ENCODE measurements at regions of chr1 and their contacts with region 1.

Region 1: GRCh38 chr1:27349784-27350662 is 8.2 kb downstream of the SYTL1 start:
- DNase-seq: no peak
- H3K4me3 ChIP-seq: no peak overlapping the region
- H3K27ac ChIP-seq: no peak overlapping the region
- H3K4me1 ChIP-seq: peaks cover 21% of the 10 kb centered on the region
- H3K27me3 ChIP-seq: no peaks in the 10 kb centered on the region
- CTCF ChIP-seq: no peak

Region 2: DNA sequence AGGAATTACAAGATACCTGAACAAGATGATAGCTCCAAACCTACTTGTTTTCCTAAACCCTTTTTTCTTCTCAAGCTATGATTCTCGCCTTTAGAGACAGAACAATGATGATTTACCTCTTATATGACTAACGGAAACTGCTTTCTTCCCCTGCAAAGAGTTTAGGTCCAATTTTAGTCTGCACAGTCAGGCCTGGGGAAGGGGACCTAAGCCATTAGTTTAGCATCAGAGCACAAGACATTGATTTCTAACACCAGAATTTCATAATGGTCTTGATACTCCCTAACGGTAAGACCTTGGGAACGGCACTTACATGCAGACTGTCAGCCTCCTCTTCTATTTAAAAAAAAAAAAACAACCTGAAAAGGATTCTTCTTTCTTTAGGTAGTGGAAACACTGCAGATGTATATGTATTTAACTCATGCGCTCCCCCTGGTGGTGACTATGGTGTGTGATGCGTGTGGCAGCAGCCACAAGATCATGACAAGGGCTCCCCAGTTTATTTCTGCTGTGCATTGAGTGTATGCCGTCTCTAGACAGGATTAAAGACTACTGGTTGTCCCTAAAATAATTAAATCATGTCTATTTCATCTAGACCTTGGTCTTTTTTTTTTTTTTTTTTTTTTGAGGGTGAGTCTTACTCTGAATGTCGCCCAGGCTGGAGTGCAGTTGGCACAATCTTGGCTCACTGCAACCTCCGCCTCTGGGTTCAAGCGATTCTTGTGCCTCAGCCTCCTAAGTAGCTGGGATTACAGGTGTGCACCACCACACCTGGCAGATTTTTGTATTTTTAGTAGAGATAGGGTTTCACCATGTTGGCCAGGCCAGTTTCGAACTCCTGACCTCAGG is 65.4 kb before region 1 on chr1:
- CTCF ChIA-PET with region 1: no interaction called
- dilution Hi-C with region 1: no loop called
- in situ Hi-C with region 1: no loop called
- intact Hi-C with region 1: no loop called
- DNase-seq: peak; percentile 55
- H3K4me3 ChIP-seq: no peak overlapping the region
- H3K27ac ChIP-seq: no peak overlapping the region
- H3K4me1 ChIP-seq: no peaks in the 10 kb centered on the region
- H3K27me3 ChIP-seq: no peaks in the 10 kb centered on the region
- CTCF ChIP-seq: peak; percentile 74 to 92

Region 3: DNA sequence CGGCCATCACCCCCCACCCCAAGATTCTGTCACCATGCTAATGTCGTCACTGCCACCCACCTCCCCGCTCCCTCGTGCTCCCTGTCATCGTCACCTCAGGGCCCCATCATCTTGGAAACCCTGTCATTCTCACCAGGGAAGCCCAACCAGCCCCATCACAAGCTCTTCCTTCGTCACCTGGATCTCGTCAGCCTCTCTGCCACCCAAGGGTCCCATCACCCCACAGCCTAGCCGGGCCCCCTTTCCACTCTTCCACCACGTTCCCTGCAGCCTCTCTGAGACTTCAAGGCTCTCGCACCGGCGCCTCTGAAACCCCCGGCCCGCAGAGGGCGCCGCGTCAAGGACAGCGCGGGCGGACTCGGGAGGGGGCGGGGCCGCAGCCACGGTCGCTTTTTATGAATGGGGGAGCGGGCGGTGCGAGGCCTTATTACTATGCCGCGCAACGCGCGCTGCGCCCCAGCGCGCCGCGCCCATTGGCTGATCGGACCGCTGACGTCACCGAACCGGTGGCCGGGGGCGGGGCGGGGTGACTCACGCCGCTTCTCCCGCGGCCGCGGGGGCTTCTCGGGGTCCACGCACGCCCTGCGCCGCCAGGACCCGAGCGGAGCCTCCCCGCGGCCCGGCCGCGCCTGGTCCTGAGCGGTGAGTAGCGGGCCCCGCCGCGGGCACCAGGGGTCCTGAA is 42.2 kb after region 1 on chr1 and contains the start of gene GPR3:
- CTCF ChIA-PET with region 1: no interaction called
- dilution Hi-C with region 1: no loop called
- in situ Hi-C with region 1: no loop called
- intact Hi-C with region 1: no loop called
- DNase-seq: peak; percentile 84
- H3K4me3 ChIP-seq: peak within 1 kb of the TSS; percentile 54 to 73 (median 64)
- H3K27ac ChIP-seq: peak within 1 kb of the TSS; percentile 86
- H3K4me1 ChIP-seq: peaks cover 26% of the 10 kb centered on the region
- H3K27me3 ChIP-seq: no peaks in the 10 kb centered on the region
- CTCF ChIP-seq: peak in 1 of 2 donors; percentile 54
- total RNA-seq, gene GPR3: 0.50 to 2.3 TPM

Region 4: GRCh38 chr1:27489910-27490741 is 140.1 kb after region 1 on chr1 and contains the start of gene WASF2:
- CTCF ChIA-PET with region 1: no interaction called
- dilution Hi-C with region 1: no loop called
- in situ Hi-C with region 1: no loop called
- intact Hi-C with region 1: no loop called
- DNase-seq: peak; percentile 95
- H3K4me3 ChIP-seq: peak within 1 kb of the TSS; percentile 63 to 94 (median 94)
- H3K27ac ChIP-seq: peak within 1 kb of the TSS; percentile 97
- H3K4me1 ChIP-seq: peaks cover 18% of the 10 kb centered on the region
- H3K27me3 ChIP-seq: no peaks in the 10 kb centered on the region
- CTCF ChIP-seq: no peak
- total RNA-seq, gene WASF2: 32.2 to 138 TPM

Region 5: GRCh38 chr1:27525296-27526272 is 175.6 kb after region 1 on chr1:
- CTCF ChIA-PET with region 1: no interaction called
- dilution Hi-C with region 1: no loop called
- in situ Hi-C with region 1: no loop called
- intact Hi-C with region 1: no loop called
- DNase-seq: peak; percentile 69
- H3K4me3 ChIP-seq: no peak overlapping the region
- H3K27ac ChIP-seq: peak overlapping the region; percentile 81
- H3K4me1 ChIP-seq: peaks cover 88% of the 10 kb centered on the region
- H3K27me3 ChIP-seq: no peaks in the 10 kb centered on the region
- CTCF ChIP-seq: no peak

Region 6: DNA sequence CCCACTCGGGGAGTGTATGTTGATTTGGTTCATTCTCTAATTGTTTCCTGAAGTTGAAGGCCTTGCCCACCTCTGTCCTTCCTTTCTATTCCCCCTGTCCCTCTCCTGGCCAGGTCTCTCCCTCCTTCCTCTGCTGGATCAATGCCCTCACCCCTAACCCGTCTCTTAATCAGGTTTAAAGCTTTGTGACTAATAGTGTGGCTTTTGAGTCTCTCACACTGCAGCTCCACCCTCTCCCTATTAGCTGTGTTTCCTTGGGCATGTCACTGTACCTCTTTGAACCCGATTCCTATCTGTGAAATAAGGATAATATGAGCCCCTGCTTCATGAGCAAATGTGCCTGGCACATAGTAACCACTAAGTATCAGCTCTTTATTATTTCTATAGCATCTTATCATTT is 233.5 kb after region 1 on chr1:
- CTCF ChIA-PET with region 1: interaction called, 15 read pairs
- dilution Hi-C with region 1: no loop called
- in situ Hi-C with region 1: no loop called
- intact Hi-C with region 1: no loop called
- DNase-seq: no peak
- H3K4me3 ChIP-seq: no peak overlapping the region
- H3K27ac ChIP-seq: no peak overlapping the region
- H3K4me1 ChIP-seq: peaks cover 7% of the 10 kb centered on the region
- H3K27me3 ChIP-seq: no peaks in the 10 kb centered on the region
- CTCF ChIP-seq: no peak